ENCODE measurements at regions of chr3 and their contacts with region 1.

Region 1: GRCh38 chr3:172993412-172993811 is 147.6 kb downstream of the SPATA16 start:
- DNase-seq: no peak
- ATAC-seq: no peak
- H3K4me3 Mint-ChIP-seq: no peak overlapping the region
- H3K27ac Mint-ChIP-seq: no peak overlapping the region
- H3K4me1 Mint-ChIP-seq: no peaks in the 10 kb centered on the region
- H3K27me3 Mint-ChIP-seq: no peaks in the 10 kb centered on the region

Region 2: GRCh38 chr3:172046268-172046915 is 947.0 kb before region 1 on chr3:
- CTCF ChIA-PET with region 1: no interaction called
- POLR2A ChIA-PET with region 1: no interaction called
- intact Hi-C with region 1: no loop called
- DNase-seq: no peak
- ATAC-seq: peak; percentile 79
- H3K4me3 Mint-ChIP-seq: no peak overlapping the region
- H3K27ac Mint-ChIP-seq: no peak overlapping the region
- H3K4me1 Mint-ChIP-seq: peaks cover 33% of the 10 kb centered on the region
- H3K27me3 Mint-ChIP-seq: no peaks in the 10 kb centered on the region

Region 3: DNA sequence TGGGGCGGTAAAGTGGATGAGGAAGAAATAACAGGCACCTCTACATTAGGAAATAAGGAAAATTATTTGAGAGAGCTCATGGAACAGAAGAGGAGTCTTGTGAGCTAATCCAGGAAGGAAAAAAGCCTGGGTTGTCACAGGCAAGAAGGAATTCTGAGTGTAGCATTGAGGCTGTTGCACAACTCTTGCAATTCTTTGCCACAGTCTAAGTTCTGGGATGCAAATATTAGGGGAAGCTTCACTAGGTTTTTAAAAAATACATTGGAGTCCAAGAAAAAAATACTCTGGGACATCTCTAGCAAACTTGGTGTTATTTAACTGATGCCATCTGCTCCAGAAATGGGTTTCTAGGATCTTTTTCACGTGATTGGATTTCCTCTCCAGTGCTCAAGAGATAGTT is 25.3 kb after region 1 on chr3:
- CTCF ChIA-PET with region 1: no interaction called
- POLR2A ChIA-PET with region 1: interaction called, 11 read pairs
- intact Hi-C with region 1: no loop called
- DNase-seq: no peak
- ATAC-seq: no peak
- H3K4me3 Mint-ChIP-seq: no peak overlapping the region
- H3K27ac Mint-ChIP-seq: no peak overlapping the region
- H3K4me1 Mint-ChIP-seq: no peaks in the 10 kb centered on the region
- H3K27me3 Mint-ChIP-seq: no peaks in the 10 kb centered on the region

Region 4: DNA sequence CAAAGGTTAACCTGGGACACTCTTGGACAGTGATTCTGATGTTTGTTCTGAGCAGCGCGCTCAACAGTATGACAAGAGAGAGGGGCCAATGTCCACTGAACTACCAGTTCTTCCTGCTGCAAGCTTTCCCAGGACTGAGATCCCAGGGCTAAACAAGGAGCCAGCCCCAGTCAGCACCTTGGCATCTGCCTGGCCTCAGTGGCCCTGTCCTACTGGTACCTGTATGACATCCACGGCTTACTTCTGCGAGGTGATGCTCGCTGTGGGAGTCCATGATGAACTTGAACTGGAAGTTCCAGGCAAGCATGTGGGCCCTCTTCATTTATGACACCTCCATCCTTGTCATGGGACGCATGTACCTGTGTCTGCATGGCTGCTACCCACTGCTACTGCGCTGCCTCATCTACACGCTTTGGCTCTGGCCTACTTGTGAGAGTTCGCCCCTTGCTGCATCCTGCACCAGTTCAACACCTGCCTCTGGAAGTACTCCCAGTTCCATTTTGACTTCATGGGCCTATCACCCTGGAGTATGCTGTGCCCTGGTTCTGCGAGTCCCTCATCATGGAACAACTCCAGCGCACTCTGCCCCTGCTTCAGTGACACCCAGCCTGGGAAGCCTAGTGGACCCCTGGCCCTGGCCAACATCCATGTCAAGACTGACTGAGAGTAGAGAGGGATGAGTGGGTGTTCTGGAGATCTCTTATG is 650.8 kb after region 1 on chr3:
- CTCF ChIA-PET with region 1: no interaction called
- POLR2A ChIA-PET with region 1: no interaction called
- intact Hi-C with region 1: no loop called
- DNase-seq: no peak
- ATAC-seq: no peak
- H3K4me3 Mint-ChIP-seq: no peak overlapping the region
- H3K27ac Mint-ChIP-seq: no peak overlapping the region
- H3K4me1 Mint-ChIP-seq: no peaks in the 10 kb centered on the region
- H3K27me3 Mint-ChIP-seq: no peaks in the 10 kb centered on the region

Region 5: GRCh38 chr3:174613173-174613572 is 1619.8 kb after region 1 on chr3:
- CTCF ChIA-PET with region 1: no interaction called
- POLR2A ChIA-PET with region 1: no interaction called
- intact Hi-C with region 1: no loop called
- DNase-seq: no peak
- ATAC-seq: no peak
- H3K4me3 Mint-ChIP-seq: no peak overlapping the region
- H3K27ac Mint-ChIP-seq: no peak overlapping the region
- H3K4me1 Mint-ChIP-seq: no peaks in the 10 kb centered on the region
- H3K27me3 Mint-ChIP-seq: no peaks in the 10 kb centered on the region